ENCODE measurements at regions of chr20 and their contacts with region 1.

Region 1: GRCh38 chr20:45373353-45374100 is 4.6 kb downstream of the TP53TG5 start:
- DNase-seq: peak; percentile 76
- H3K4me3 Mint-ChIP-seq: peak overlapping the region; percentile 64
- H3K27ac Mint-ChIP-seq: peak overlapping the region; percentile 67
- H3K4me1 Mint-ChIP-seq: peaks cover 19% of the 10 kb centered on the region
- H3K27me3 Mint-ChIP-seq: no peaks in the 10 kb centered on the region

Region 2: GRCh38 chr20:45415774-45416637 is 42.5 kb after region 1 on chr20 and contains the start of gene PIGT:
- intact Hi-C with region 1: loop called (anchors 2 kb)
- DNase-seq: peak; percentile 86
- H3K4me3 Mint-ChIP-seq: peak within 1 kb of the TSS; percentile 92
- H3K27ac Mint-ChIP-seq: peak within 1 kb of the TSS; percentile 91
- H3K4me1 Mint-ChIP-seq: peaks cover 31% of the 10 kb centered on the region
- H3K27me3 Mint-ChIP-seq: no peaks in the 10 kb centered on the region
- total RNA-seq, gene PIGT: 72.5 and 72.7 TPM in 2 replicates

Region 3: GRCh38 chr20:45436732-45437391 is 63.3 kb after region 1 on chr20:
- intact Hi-C with region 1: loop called (anchors 1 kb)
- DNase-seq: peak; percentile 74
- H3K4me3 Mint-ChIP-seq: peak overlapping the region; percentile 70
- H3K27ac Mint-ChIP-seq: no peak overlapping the region
- H3K4me1 Mint-ChIP-seq: peaks cover 11% of the 10 kb centered on the region
- H3K27me3 Mint-ChIP-seq: no peaks in the 10 kb centered on the region